HAP-1 (cell line): ENCODE measurements at regions of chr9 and their contacts with region 1.

Region 1: DNA sequence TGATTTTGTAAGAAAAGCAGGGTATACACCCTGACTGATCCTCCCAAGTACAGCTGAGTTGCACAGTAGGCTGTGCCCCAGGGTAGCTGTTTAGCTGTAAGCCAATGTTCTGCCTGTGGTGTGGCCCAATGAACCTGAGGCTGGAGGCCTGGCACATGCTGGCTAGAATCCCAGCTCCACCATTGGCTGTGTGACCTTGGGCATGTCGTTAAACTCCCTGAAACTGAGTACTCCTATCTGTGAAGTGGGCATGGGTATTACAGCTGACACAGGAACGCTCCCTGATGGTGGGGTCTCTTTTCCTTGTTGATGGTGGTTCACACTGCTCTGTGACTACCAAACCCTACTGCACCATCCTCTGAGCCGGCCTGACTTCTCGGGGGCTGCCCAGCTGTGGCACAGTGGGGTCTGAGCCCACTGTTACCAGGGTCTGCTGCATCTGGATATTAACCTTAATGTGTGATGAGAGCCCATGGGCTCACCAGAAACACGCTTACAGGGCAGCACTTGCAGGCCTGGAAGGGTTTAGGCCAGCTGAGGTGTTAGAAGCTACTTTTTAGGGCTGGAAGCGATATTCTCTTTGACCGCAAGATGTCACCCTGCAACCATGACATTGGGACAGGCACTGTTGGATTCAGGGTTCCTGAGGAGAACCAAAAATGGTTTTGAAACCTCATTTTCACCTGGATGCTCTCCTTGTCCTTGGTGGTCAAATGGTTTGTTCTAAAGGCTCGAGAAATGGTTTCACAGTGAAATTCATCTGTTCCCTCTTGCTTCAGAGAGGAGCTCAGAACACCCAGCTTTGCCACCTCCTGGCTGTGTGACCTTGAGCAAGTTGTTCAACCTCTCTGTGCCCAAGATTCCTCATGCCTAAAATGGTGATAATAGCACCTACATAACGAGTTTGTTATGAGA is 6.8 kb upstream of the GADD45G start:
- DNase-seq: peak; percentile 50 to 67
- H3K4me3 ChIP-seq: no peak overlapping the region
- H3K4me1 ChIP-seq: no peaks in the 10 kb centered on the region
- H3K27me3 ChIP-seq: peaks cover 5% of the 10 kb centered on the region; the same call in 1 of the 2 replicates

Region 2: DNA sequence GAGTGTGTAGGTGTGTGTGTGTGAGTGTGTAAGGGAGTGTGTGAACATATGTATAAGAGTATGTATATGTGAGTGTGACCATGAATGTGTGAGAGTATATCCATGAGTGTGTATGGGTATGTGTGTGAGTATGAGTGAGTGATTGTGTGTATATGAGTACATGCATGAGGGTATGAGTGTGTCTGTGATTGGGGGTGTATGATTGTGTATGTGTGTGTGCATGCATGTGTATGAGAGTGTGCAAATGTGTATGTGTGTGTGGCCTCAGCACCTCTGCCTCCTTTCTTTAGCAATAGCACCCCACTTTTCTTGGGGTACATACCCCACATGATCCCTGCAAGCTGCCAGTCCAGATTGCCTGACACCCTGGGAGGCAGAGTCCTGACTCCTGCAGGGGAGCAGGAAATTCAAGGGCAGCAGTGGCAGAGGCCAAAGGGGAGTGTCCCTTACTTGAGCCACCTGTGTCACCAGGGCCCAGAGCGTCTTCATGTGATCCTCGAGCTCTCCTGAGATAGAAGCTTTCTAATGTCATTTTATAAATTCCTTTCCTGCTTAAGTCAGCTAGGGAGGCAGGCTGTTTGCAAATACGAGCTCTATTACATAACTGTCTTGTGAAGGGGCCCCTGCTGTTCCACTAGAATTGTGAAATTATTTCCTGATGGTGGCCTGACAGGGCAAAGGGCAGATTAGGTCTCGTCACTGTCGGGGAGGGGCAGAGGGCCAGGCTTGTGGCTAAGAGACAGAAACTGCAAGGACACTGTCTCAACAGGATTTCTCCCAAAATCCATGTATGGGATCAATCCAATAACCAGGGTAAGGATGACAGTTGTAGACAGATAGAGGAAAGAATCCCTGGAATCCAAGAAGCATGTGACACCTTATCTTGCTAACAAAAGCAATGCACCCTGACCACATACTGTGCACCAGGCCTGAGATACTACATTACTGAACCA is 396.0 kb after region 1 on chr9:
- in situ Hi-C with region 1: no loop called
- DNase-seq: no peak
- H3K4me3 ChIP-seq: no peak overlapping the region
- H3K4me1 ChIP-seq: no peaks in the 10 kb centered on the region
- H3K27me3 ChIP-seq: no peaks in the 10 kb centered on the region

Region 3: DNA sequence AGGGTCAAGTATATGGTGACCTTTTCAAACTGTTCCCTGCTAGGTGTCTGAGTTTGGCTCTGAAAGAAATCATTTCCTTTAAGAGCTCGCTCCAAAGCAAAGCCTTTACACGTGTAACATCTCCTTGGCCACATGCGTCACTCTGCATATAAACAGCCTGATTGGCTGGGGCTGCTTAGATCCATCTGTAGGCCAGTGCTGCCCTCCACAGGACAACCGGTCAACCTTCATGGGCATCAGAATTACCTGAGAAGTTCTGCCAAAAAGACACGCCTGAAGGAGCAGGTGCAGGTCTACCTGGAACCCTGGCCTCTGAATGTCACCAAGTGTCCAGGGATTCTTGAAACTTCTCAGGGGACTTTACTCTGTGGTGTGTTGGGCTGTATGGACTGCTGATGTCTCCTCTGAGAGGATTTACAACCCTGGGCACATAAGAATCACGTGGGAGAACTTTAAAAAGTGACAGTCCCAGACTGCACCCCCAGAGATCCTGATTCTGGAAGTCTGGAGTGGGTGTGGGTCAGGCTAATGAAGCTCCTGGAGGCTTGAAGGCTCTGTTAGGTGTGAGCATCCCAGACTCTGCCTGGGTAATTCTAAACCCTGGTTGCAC is 504.4 kb after region 1 on chr9:
- in situ Hi-C with region 1: loop called (anchors 5 kb)
- DNase-seq: peak; percentile 79 to 82
- H3K4me3 ChIP-seq: no peak overlapping the region
- H3K4me1 ChIP-seq: no peaks in the 10 kb centered on the region
- H3K27me3 ChIP-seq: no peaks in the 10 kb centered on the region

Region 4: GRCh38 chr9:90219548-90220118 is 621.7 kb after region 1 on chr9:
- in situ Hi-C with region 1: loop called (anchors 10 kb)
- DNase-seq: peak in 1 of 2 experiments; percentile 44
- H3K4me3 ChIP-seq: no peak overlapping the region
- H3K4me1 ChIP-seq: no peaks in the 10 kb centered on the region
- H3K27me3 ChIP-seq: no peaks in the 10 kb centered on the region

Region 5: DNA sequence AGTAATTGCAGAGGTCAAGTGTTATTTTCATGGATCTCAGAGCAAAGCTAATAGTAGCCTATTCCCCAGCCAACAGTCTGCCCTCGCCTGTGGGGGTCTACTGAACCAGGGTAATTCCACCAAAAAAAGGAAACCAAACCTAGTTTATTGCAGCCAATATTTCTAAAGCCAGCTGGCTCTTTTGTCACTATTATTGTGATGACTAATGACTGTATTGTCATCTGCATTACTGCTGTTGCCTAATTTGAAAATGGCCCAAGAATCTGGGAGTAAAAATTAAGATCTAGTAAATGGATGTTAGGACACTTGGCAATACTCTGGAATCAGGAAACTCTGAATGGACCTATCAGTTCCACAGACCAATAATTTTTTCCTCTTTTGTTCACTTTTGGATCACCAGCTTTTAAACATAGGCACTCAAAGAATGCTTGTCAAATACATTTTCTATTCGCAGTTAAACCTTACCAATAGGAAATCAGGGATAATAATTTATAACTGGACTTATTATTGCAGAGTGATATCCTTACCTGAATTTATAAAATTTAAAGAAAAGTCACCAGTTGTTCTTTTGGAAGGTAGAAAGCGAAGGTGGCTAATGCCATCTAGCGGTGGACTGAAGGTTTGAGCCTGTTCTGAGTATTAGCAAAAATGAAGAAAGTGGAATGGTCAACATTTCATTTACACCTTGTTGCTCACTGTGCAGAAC is 1272.8 kb after region 1 on chr9:
- in situ Hi-C with region 1: loop called (anchors 10 kb)
- DNase-seq: peak; percentile 41 to 42
- H3K4me3 ChIP-seq: no peak overlapping the region
- H3K4me1 ChIP-seq: peaks cover 8% of the 10 kb centered on the region
- H3K27me3 ChIP-seq: peaks cover 10% of the 10 kb centered on the region; the same call in 1 of the 2 replicates